A549 (cell line): ENCODE measurements at regions of chr11 and their contacts with region 1.

Region 1: DNA sequence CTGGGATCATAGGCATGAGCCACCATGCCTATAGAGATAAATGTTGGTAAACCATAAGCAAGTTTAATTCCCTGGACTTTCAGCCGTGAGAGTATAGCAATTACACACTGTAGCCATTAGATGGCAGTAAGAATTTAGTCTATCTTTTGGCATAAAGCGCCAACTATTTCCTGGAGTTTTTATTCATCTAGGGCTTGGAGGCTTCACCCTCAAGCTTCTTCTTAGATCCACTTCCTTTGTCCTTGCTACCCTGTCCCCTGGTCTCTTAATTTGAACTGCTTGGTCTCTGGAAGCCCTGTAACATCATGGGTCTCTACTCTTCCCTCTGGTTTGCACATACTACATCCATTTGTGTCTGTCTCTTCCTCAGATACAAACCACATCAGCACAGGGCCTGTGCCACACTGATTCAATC is 38.2 kb downstream of the OR10A6 start:
- DNase-seq: peak; percentile 54 to 57
- ATAC-seq: peak; percentile 75 to 92; a peak in 5 of 6 replicates
- H3K4me3 ChIP-seq: no peak overlapping the region
- H3K27ac ChIP-seq: no peak overlapping the region
- H3K4me1 ChIP-seq: no peaks in the 10 kb centered on the region
- CTCF ChIP-seq: peak; percentile 76
- EP300 ChIP-seq: no peak
- POLR2A ChIP-seq: no peak
- RAD21 ChIP-seq: peak; percentile 66 to 70

Region 2: DNA sequence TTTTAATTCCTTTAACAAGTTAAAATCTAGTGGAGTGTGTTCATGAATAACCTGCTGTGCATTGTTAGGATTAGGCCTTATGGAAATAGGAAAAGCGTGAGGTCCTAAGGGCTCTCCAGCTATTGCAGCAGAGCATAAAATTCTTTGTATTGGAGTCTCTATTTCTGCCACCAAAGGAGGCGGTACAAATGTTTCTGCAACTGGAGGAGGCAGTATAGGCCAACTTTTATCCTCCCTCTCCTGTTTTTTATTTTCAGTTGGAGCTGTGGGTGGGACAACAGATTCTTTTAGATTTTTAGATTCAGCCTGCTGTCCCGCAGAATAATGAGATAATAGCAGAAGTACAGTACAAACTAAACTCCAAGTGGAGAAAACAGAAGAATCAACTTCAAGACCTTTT is 12.1 kb after region 1 on chr11:
- CTCF ChIA-PET with region 1: interaction called, 39 read pairs
- POLR2A ChIA-PET with region 1: no interaction called
- DNase-seq: no peak
- ATAC-seq: no peak
- H3K4me3 ChIP-seq: no peak overlapping the region
- H3K27ac ChIP-seq: no peak overlapping the region
- H3K4me1 ChIP-seq: no peaks in the 10 kb centered on the region
- CTCF ChIP-seq: no peak
- EP300 ChIP-seq: no peak
- POLR2A ChIP-seq: no peak
- RAD21 ChIP-seq: no peak

Region 3: GRCh38 chr11:7977232-7977917 is 84.5 kb after region 1 on chr11:
- CTCF ChIA-PET with region 1: interaction called, 114 read pairs
- POLR2A ChIA-PET with region 1: no interaction called
- DNase-seq: peak in 1 of 2 experiments; percentile 24
- ATAC-seq: peak; percentile 36 to 50; a peak in 3 of 6 replicates
- H3K4me3 ChIP-seq: no peak overlapping the region
- H3K27ac ChIP-seq: peak overlapping the region; percentile 34 to 71; a peak in 5 of 6 replicates
- H3K4me1 ChIP-seq: peaks cover 11% of the 10 kb centered on the region
- CTCF ChIP-seq: no peak
- EP300 ChIP-seq: no peak
- POLR2A ChIP-seq: no peak
- RAD21 ChIP-seq: no peak

Region 4: DNA sequence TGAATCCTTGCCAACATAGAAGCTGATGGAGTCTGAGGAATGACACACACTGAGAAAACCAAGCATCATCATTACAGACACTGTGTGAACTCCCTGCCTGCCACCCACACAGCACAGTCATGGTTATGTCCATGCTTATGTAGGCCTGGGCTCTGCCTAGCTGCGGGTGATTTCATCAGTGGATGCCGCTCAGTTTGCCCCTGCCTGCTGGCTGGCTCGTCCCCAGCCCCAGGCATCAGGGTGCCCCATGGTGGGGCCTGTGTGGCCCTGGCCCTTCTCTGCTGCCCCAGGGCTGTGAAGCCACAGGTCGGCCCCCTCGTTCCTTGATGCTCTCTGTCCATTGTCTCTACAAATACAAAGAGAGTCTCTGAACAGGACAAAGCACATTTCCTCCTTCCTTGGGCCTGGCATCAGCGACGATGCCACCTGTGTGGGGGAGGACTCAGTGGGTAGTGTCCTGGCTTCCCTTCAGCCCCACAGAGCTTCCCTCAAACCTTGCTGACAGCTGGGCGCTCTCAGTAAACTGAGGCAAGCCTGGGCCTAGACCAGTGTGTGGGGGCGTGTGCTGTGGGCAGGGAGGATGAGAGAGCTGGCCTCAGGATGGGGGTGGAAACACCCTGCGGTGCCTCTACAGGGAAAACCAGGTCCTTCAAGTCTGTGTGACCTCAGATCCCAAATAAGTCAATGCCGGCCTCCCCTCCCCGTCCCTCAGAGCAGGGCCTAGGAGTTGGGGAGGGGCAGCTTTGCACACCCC is 168.1 kb after region 1 on chr11:
- CTCF ChIA-PET with region 1: no interaction called
- POLR2A ChIA-PET with region 1: no interaction called
- DNase-seq: no peak
- ATAC-seq: no peak
- H3K4me3 ChIP-seq: no peak overlapping the region
- H3K27ac ChIP-seq: no peak overlapping the region
- H3K4me1 ChIP-seq: no peaks in the 10 kb centered on the region
- CTCF ChIP-seq: no peak
- EP300 ChIP-seq: no peak
- POLR2A ChIP-seq: no peak
- RAD21 ChIP-seq: no peak